AG04449 (cell line): ENCODE measurements at regions of chr11 and their contacts with region 1.

Region 1: DNA sequence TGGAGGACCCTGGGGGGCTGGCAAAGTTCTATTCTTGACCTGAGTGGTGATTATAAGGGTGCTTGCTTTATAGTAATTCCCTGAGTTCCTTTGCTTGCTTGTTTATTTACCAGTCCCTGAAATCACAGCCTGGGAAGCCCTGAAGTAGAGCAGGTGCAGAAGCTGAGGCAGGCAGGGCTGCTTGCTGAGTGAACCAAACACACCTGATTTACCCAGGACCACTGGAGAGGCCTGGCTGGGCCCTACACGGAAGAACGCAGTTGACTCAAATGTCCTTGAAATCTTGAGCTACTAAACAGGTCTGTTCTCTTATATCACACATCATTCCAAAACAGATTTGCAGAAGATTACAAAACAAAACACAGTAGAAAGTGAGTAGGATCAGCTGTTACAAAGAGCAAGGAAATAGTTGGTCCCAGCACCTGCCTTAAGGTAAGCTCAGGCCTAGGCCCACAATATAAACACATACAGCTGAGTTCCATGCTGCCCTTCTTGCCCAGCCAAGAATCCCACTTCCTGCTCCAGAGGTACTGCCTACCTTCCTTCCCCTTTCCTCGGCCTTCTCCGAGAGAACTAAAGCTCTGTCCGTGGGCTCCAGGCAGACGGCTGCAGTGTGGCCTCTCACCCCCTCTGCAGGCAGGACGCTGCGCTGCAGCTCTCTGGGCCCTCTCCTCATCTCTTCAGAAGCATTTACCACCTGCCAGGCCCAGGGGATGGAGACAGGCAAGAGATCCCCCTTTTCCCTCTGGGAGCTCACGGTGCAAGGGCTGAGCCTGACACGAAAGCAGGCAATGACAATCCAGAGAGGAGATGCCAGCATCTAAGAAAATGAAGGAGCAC is 46.1 kb upstream of the SCUBE2 start:
- DNase-seq: no peak
- H3K4me3 ChIP-seq: no peak overlapping the region
- CTCF ChIP-seq: peak; percentile 93

Region 2: GRCh38 chr11:8911029-8911826 is 226.3 kb before region 1 on chr11 and contains the start of gene AKIP1:
- CTCF ChIA-PET with region 1: interaction called, 17 read pairs
- POLR2A ChIA-PET with region 1: no interaction called
- DNase-seq: no peak
- H3K4me3 ChIP-seq: peak within 1 kb of the TSS; percentile 85
- CTCF ChIP-seq: no peak

Region 3: GRCh38 chr11:8964324-8965320 is 172.9 kb before region 1 on chr11 and contains the start of gene TMEM9B:
- CTCF ChIA-PET with region 1: interaction called, 23 read pairs
- POLR2A ChIA-PET with region 1: no interaction called
- DNase-seq: no peak
- H3K4me3 ChIP-seq: peak within 1 kb of the TSS; percentile 87
- CTCF ChIP-seq: no peak

Region 4: GRCh38 chr11:9015677-9016076 is 121.8 kb before region 1 on chr11:
- CTCF ChIA-PET with region 1: interaction called, 162 read pairs
- POLR2A ChIA-PET with region 1: no interaction called
- DNase-seq: peak; percentile 5
- H3K4me3 ChIP-seq: no peak overlapping the region
- CTCF ChIP-seq: peak; percentile 81

Region 5: DNA sequence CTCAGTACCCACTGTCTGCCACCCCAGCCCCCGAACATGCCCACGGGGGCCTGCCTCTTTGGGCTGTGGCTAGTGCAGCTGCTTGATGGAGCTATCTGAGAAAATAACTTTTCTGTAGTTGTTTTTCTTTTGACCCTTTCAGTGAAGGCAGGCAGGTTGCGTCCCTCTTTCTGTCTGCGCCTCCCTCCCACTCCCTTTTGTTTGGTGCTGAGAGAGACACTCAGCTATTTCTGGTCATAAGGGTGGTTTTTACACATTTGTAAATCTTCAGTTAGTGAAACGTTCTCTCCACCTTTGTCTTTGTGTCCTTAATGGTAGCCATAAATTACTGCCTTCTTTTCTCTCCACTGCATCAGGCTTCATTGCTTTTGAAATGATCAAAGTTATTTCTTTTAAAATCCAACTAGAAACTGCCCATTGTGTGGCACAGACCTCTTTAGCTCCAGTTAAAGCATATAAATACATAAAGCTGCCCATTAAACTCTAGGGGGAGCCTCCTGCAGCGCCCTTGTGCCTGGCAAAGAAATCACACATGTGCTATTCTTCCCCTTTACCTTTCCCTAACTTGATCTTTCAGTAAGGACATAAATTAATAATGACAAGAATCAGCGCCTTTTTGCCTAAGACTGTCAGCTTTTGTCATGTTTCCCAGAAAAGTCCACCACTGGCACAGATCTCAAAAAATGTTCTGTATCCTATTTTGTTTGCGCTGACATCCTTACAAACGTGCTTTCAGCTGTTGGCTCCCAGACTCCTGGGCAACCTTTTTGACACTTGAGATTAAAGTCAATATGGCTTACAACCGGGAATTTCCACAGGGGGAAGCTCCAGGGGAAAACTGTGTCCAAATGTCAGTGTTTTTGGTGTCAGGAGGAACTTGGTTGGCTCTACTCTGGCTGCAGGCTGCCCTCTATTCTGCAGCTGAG is 44.4 kb before region 1 on chr11:
- CTCF ChIA-PET with region 1: interaction called, 12 read pairs
- POLR2A ChIA-PET with region 1: no interaction called
- DNase-seq: no peak
- H3K4me3 ChIP-seq: no peak overlapping the region
- CTCF ChIP-seq: peak; percentile 24

Region 6: DNA sequence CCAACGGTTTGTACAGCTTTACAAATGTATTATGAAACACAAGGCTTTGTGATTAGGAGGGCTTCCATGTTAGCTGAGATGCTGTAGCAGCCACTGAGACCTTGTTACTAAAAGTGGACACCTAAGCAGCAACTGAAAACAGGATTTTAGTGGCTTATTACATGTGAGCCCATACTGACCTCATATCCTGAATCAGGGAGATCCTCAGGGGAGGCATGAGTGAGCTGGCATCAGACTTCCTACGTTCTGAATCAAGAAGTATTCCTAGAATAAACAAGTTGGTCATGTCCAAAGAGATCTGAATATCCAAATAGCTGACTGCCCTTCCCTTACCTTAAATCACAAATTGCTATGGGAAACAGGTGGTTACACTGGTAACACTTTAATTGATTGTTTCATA is 13.0 kb after region 1 on chr11:
- CTCF ChIA-PET with region 1: interaction called, 54 read pairs
- POLR2A ChIA-PET with region 1: no interaction called
- DNase-seq: peak; percentile 72
- H3K4me3 ChIP-seq: no peak overlapping the region
- CTCF ChIP-seq: no peak